Aorta (tissue), 5 donors: ENCODE measurements at regions of chr5 and their contacts with region 1.

Region 1: DNA sequence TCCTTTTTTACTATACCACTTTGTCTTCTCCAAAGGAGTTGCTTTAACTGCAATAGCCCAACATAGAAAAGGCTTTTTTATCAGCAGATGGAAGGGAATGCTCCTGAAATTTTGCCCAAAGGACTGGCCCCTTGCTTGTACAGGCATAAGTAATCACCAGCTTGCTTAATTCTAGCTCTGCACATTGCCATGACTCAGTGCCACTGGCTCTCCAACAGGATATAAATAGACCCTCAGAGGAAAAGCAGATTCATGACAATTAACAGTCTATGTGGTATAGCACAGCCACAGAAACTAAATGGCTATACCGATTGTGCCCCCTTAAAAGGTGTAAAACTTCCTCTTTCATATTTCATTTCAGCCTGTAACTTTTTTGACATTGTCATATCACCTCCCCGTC is 227.0 kb downstream of the ZNF608 start:
- DNase-seq: peak in 1 of 2 donors; percentile 59
- ATAC-seq: peak; percentile 33
- H3K4me3 ChIP-seq: no peak overlapping the region
- H3K27ac ChIP-seq: no peak overlapping the region
- H3K4me1 ChIP-seq: peaks cover 2 to 5% of the 10 kb centered on the region in 2 donors
- H3K27me3 ChIP-seq: no peaks in the 10 kb centered on the region

Region 2: GRCh38 chr5:124902097-124902821 is 382.9 kb after region 1 on chr5:
- intact Hi-C with region 1: loop called in 1 of 2 experiments (anchors 10 kb)
- DNase-seq: no peak
- ATAC-seq: no peak
- H3K4me3 ChIP-seq: no peak overlapping the region
- H3K27ac ChIP-seq: no peak overlapping the region
- H3K4me1 ChIP-seq: peaks cover 0 to 6% of the 10 kb centered on the region in 2 donors
- H3K27me3 ChIP-seq: no peaks in the 10 kb centered on the region

Region 3: GRCh38 chr5:124935065-124935464 is 415.7 kb after region 1 on chr5:
- intact Hi-C with region 1: no loop called
- DNase-seq: no peak
- ATAC-seq: no peak
- H3K4me3 ChIP-seq: no peak overlapping the region
- H3K27ac ChIP-seq: no peak overlapping the region
- H3K4me1 ChIP-seq: no peaks in the 10 kb centered on the region
- H3K27me3 ChIP-seq: no peaks in the 10 kb centered on the region